Sigmoid colon (tissue), 7 donors: ENCODE measurements at regions of chr15 and their contacts with region 1.

Region 1: GRCh38 chr15:98647774-98648653 is at the start of gene IGF1R:
- DNase-seq: peak; percentile 93
- H3K4me3 ChIP-seq: peak within 1 kb of the TSS; percentile 63 to 94 (median 85)
- H3K27ac ChIP-seq: peak within 1 kb of the TSS; percentile 92 to 98 (median 96)
- H3K4me1 ChIP-seq: peaks cover 0 to 21% (median 14%) of the 10 kb centered on the region in 4 donors
- H3K27me3 ChIP-seq: no peaks in the 10 kb centered on the region
- CTCF ChIP-seq: peak in 1 of 4 experiments; percentile 24
- EP300 ChIP-seq: no peak
- POLR2A ChIP-seq: no peak
- total RNA-seq, gene IGF1R: 39.6 to 130 (median 61.3) TPM

Region 2: DNA sequence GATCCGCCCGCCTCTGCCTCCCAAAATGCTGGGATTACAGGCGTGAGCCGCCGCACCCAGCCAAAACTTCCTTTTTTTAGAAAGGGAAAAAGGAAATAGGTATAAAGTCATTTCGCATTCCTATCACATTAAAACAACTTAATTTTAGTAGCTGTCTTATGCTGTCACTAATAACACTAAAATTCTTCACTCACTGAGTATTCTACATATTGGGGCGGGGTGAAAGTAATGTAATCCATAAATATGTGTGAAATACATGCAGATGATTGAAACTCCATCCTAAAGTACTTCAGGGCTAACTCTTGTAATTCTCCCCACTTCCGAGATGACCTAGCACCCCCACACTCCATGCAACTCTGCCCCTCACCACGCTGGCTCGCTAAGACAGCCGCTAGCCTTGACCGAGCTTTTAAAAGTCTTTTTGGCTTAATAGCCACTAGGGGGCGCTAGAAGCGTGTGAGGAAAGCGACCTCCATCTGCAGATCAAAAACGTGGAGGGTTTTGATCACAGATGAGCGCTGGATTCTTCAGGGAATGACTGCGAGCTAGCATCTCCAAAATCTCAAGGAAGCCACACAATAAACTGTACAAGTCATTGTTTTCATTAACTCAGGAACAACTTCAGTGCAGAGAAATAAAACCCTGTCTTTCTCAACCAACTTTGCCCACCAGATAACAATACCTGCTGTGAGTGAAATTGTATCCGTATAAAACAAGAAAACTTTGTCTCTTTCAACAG is 129.0 kb before region 1 on chr15:
- intact Hi-C with region 1: loop called (anchors 2 kb)
- DNase-seq: peak; percentile 78
- H3K4me3 ChIP-seq: no peak overlapping the region
- H3K27ac ChIP-seq: no peak overlapping the region
- H3K4me1 ChIP-seq: peaks cover 0 to 8% (median 0%) of the 10 kb centered on the region in 4 donors
- H3K27me3 ChIP-seq: no peaks in the 10 kb centered on the region
- CTCF ChIP-seq: peak; percentile 77 to 78 (median 77)
- EP300 ChIP-seq: no peak
- POLR2A ChIP-seq: no peak

Region 3: DNA sequence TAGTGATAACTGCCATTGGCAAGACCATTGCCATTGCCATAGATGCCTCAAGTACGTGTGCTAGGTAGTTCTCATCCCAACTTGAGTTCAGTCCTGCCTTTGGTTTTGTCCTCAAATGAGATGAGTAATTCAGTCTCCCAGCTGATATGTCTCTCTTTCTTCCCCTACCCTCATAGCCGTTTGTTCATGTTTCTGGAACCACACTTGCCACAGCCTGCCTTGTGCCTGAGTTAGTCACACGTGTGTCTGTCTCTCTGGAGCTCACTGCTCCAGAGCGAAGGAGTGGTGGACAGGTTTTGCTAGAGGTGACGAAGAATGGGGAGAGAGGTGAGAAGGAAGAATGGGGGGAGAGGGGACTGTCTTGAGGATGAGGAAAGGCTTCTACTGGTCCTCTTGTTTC is 87.7 kb before region 1 on chr15:
- intact Hi-C with region 1: no loop called
- DNase-seq: no peak
- H3K4me3 ChIP-seq: no peak overlapping the region
- H3K27ac ChIP-seq: no peak overlapping the region
- H3K4me1 ChIP-seq: peaks cover 0 to 13% (median 7%) of the 10 kb centered on the region in 4 donors
- H3K27me3 ChIP-seq: no peaks in the 10 kb centered on the region
- CTCF ChIP-seq: no peak
- EP300 ChIP-seq: no peak
- POLR2A ChIP-seq: no peak

Region 4: DNA sequence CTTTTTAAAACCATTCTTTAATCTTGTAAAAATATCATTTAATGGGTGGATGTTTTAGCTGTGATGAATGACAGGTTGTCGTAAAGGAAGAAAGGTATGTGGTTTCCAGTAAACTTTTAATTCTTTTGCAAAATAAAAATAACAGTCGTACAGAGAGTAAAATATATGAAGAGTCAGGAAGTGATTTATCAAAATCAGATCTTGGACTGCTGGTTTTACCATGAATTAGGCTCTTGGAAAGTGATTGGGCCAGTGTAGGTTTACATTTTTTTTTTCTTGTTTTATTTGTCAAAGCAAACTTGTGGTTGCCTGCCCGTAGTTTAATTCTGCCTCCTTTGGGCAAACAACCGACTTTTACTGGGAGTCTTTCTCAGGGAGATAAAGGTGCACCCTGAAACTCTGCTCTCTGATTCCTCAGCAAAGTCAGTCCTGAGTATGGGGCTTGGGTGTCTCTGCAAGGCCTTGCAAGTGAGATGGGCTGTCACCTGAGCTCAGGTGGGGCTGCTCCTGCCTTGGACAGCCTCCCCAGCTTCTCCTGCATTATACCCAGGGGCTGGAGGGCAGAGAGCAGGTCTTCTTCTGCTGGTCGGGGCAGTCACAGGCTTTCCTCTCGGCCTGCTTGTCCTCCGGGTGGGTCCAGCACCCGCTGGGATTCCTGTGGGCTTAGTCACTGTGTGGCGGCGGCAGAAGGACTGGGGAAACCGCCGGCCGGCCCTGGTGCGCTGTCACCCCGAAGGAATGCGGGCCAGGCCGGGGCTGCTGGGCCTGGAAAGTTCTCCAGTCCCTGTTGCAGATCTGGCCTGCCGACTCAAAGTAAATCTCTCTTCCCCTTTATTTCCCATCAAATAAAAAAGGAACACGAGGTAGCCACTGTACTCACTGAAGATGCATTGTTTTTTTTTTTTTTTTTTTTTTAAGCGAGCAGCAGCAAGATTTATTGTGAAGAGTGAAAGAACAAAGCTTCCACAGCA is 79.4 kb after region 1 on chr15:
- intact Hi-C with region 1: loop called (anchors 5 kb)
- DNase-seq: peak; percentile 97
- H3K4me3 ChIP-seq: no peak overlapping the region
- H3K27ac ChIP-seq: peak overlapping the region; percentile 88 to 95 (median 90)
- H3K4me1 ChIP-seq: peaks cover 0 to 77% (median 73%) of the 10 kb centered on the region in 4 donors
- H3K27me3 ChIP-seq: no peaks in the 10 kb centered on the region
- CTCF ChIP-seq: no peak
- EP300 ChIP-seq: peak in 1 of 4 donors; percentile 75
- POLR2A ChIP-seq: no peak

Region 5: DNA sequence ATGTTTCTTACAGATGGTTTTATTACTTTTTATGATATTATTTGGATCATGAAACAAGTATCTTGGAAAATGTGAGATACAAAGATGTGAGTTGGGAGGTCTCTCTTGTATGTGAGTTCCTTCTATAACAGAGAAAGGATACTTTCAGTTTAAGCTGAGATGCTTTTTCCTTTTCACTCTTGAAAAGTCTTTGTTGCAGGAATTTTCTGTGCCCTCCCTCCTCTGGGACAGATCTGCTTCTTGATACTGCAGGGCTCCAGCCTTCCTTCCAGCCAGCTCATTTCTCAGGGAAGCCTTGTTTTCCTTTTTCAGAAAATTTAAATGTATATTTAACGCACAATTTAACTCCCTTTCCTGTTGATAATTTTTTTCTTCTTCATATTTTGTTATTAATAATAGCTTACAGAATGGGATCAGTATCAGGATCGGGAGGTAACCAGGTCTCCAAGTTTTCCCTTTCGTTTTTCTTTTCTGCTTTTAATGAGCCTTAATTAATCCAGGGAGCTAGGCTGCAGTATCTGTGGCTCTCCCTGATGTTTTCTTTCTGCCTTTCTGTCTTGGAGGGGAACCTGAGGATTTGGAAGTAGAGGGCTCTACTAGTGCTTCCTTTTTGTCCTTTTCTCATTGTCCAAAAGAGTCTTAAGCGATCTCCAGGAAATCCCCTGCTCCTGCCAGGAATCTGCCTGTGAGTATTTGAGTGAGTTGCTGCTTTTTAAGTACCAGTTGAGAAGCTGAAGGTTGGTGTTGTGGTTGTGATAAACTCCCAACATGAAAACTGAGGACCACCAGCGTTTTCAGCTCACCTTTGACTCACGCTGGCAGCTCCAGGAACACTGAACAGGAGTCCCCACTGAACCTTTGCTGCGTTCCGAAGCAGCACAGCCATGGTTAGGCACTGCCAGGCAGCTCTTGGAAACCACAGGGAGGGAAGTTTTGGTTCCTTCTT is 106.0 kb after region 1 on chr15:
- intact Hi-C with region 1: no loop called
- DNase-seq: no peak
- H3K4me3 ChIP-seq: peak overlapping the region in 3 of 4 donors; percentile 29 to 33 (median 29)
- H3K27ac ChIP-seq: peak overlapping the region in 3 of 4 donors; percentile 44 to 62 (median 53)
- H3K4me1 ChIP-seq: peaks cover 0 to 60% (median 41%) of the 10 kb centered on the region in 4 donors
- H3K27me3 ChIP-seq: no peaks in the 10 kb centered on the region
- CTCF ChIP-seq: no peak
- EP300 ChIP-seq: no peak
- POLR2A ChIP-seq: no peak

Region 6: DNA sequence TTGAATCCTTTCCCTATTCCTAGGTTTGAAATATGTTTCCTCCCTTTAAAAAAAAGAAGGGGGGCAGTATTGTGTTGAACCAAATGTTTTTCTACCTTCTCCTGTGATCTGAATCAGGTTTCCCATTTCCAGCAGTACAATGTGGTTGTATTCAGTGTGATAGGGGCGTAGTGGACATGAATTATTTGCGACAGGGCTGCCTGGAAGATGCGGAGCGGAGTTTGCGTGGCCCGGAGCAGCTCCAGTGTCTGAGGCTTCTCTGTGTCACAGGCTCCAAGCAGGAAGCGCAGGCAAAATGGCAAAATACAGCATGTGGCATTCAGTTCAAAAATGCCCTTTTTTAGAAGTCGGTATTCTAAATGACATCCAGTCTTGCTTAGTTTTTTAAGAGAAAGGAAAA is 205.1 kb after region 1 on chr15:
- intact Hi-C with region 1: loop called (anchors 1 kb)
- DNase-seq: peak; percentile 94
- H3K4me3 ChIP-seq: peak overlapping the region; percentile 47 to 60 (median 57)
- H3K27ac ChIP-seq: peak overlapping the region; percentile 86 to 91 (median 89)
- H3K4me1 ChIP-seq: peaks cover 2 to 84% (median 76%) of the 10 kb centered on the region in 4 donors
- H3K27me3 ChIP-seq: no peaks in the 10 kb centered on the region
- CTCF ChIP-seq: no peak
- EP300 ChIP-seq: peak in 1 of 4 donors; percentile 56
- POLR2A ChIP-seq: peak in 1 of 2 donors; percentile 25

Region 7: DNA sequence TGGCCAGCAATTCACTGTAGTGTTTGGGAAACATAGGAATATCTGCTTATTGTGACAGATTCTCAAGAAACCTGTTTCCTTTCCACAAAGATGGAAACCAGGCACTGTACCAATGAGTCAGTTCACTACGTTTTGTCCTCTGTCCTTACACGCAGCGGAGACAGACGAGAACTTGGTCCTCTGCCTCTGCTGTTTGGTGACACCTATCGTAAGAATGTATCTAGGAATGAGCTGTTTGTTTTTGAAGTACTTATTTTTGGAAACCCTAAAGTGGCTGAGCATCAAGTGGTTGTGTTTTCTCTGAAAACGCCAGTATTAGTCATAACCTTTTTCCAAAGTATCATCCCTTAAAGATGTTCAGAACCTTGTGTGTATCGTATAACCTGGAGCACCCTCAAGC is 266.6 kb after region 1 on chr15:
- intact Hi-C with region 1: no loop called
- DNase-seq: peak; percentile 81
- H3K4me3 ChIP-seq: no peak overlapping the region
- H3K27ac ChIP-seq: peak overlapping the region in 2 of 4 donors; percentile 45 to 63
- H3K4me1 ChIP-seq: peaks cover 0 to 20% (median 19%) of the 10 kb centered on the region in 4 donors
- H3K27me3 ChIP-seq: no peaks in the 10 kb centered on the region
- CTCF ChIP-seq: no peak
- EP300 ChIP-seq: no peak
- POLR2A ChIP-seq: no peak

Region 8: GRCh38 chr15:98983333-98983732 is 335.3 kb after region 1 on chr15:
- intact Hi-C with region 1: no loop called
- DNase-seq: peak; percentile 74
- H3K4me3 ChIP-seq: no peak overlapping the region
- H3K27ac ChIP-seq: peak overlapping the region in 3 of 4 donors; percentile 47 to 72 (median 47)
- H3K4me1 ChIP-seq: peaks cover 0 to 10% (median 10%) of the 10 kb centered on the region in 4 donors
- H3K27me3 ChIP-seq: no peaks in the 10 kb centered on the region
- CTCF ChIP-seq: no peak
- EP300 ChIP-seq: peak in 1 of 4 donors; percentile 67
- POLR2A ChIP-seq: no peak

Region 9: GRCh38 chr15:99076552-99077308 is 428.7 kb after region 1 on chr15:
- intact Hi-C with region 1: loop called (anchors 2 kb)
- DNase-seq: peak; percentile 82
- H3K4me3 ChIP-seq: peak overlapping the region in 3 of 4 donors; percentile 32 to 40 (median 37)
- H3K27ac ChIP-seq: peak overlapping the region; percentile 48 to 61 (median 60)
- H3K4me1 ChIP-seq: no peaks in the 10 kb centered on the region
- H3K27me3 ChIP-seq: no peaks in the 10 kb centered on the region
- CTCF ChIP-seq: peak; percentile 80 to 86 (median 82)
- EP300 ChIP-seq: no peak
- POLR2A ChIP-seq: no peak